ENCODE measurements at regions of chr11 and their contacts with region 1.

Region 1: DNA sequence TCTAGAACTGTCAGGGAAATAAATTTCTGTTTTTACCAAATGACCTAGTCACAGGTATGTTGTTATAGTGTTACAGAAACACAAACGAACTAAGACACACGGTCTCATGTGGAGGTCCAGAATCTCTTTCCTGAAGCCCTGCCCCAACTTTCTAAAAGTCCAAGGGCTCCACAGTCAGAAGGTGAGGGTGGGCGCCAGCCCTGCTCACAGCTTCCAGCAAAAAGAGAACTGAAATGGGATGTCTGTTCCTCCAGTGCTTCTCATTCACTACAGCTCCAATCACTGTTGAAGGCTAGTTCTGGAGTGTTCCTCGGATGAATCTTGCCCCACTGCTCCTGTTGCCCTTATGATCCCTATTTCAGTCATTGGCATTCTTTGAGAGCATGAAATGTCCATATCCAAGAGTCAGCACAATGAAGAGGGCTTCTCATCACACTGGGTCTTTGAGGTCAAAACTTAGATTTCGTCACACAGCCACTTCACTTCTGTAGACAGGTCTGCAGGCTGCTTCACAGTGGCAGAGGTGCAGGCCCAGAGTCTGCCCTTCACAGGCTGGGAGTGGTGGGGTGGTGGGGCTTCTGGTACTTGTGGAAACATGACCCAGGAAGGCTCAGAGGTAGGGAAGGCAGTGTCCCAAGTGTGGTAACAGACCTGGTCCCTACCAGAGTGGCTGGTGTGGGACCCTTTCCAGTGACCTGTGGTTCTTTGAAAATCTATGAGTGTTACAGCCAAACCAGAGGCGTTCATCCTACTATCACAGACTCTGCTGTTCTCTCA is 34.9 kb downstream of the FAM181B start:
- DNase-seq: no peak
- H3K4me3 ChIP-seq: no peak overlapping the region
- H3K27ac ChIP-seq: no peak overlapping the region
- H3K4me1 ChIP-seq: no peaks in the 10 kb centered on the region
- H3K27me3 ChIP-seq: no peaks in the 10 kb centered on the region
- CTCF ChIP-seq: no peak

Region 2: DNA sequence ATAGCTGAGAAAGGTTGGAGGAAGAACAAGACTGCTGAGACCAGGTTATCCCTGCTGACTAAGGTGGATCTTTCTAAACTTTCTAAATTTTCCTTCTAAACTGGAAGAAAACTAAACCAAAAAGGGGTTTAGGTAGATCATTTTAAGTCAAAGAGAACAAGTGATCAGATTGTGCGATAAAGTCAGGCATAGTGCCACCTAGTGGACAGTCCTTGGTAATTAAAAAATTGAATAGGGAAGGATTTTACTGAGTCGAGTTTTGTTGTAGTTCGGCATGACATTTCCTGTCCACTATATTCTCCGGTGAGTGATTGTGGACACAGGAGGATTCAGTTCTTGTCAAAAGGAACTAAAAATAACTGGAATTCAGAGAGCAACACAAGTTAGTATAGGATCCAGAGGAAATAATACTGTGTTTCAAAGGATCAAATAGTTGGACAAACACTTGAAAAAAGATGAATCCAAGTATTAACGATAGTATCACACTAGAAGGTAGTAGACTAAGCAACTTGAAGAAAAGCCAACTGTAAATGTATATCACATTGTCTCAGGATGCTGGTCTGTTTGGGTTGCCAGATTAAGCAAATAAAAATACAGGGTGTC is 1201.5 kb before region 1 on chr11:
- CTCF ChIA-PET with region 1: no interaction called
- POLR2A ChIA-PET with region 1: no interaction called
- intact Hi-C with region 1: loop called (anchors 10 kb)
- DNase-seq: peak; percentile 75
- H3K4me3 ChIP-seq: no peak overlapping the region
- H3K27ac ChIP-seq: no peak overlapping the region
- H3K4me1 ChIP-seq: peaks cover 7% of the 10 kb centered on the region
- H3K27me3 ChIP-seq: no peaks in the 10 kb centered on the region
- CTCF ChIP-seq: peak; percentile 88

Region 3: GRCh38 chr11:81644239-81644840 is 1054.4 kb before region 1 on chr11:
- CTCF ChIA-PET with region 1: interaction called, 3 read pairs
- POLR2A ChIA-PET with region 1: no interaction called
- intact Hi-C with region 1: loop called (anchors 5 kb)
- DNase-seq: peak; percentile 90
- H3K4me3 ChIP-seq: no peak overlapping the region
- H3K27ac ChIP-seq: no peak overlapping the region
- H3K4me1 ChIP-seq: peaks cover 11% of the 10 kb centered on the region
- H3K27me3 ChIP-seq: no peaks in the 10 kb centered on the region
- CTCF ChIP-seq: peak; percentile 90

Region 4: DNA sequence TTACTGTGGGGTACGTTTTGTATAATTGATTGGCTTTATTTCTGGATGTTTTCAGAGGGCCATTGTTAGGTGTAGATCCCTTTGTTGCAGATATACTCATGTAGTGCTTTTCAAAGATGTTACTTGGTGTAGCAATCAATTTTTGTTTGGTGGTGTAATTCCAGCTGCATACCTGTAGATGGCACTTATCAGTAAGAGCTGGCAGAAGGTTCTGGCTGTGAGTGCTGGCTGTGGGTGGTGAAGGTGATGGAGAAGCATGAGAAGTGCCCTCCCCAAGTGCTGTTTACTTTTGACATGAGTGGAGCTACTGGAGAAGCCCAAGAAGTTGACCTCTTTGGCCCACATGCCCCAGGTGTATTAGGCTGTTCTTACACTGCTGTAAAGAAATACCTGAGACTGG is 1040.0 kb before region 1 on chr11:
- CTCF ChIA-PET with region 1: no interaction called
- POLR2A ChIA-PET with region 1: no interaction called
- intact Hi-C with region 1: loop called (anchors 5 kb)
- DNase-seq: peak; percentile 65
- H3K4me3 ChIP-seq: no peak overlapping the region
- H3K27ac ChIP-seq: no peak overlapping the region
- H3K4me1 ChIP-seq: no peaks in the 10 kb centered on the region
- H3K27me3 ChIP-seq: no peaks in the 10 kb centered on the region
- CTCF ChIP-seq: peak; percentile 71

Region 5: DNA sequence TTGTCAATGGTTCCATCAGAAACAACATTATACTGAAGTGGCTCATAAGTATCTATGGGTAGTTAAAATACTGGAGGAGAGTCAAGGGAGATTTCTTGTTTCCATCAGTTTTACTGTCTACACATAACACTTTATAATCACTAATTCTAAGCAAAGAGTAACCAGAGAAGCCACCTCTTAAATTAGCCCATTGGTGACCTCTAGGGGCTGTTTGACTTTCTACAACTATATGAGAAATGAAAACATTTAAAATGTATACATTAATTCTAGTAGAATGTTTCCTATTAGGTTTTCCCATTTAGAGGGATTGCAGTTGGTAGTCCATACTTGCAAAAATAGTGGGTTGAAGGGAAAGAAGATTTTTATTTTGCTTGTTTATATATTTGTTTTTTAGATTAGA is 469.4 kb before region 1 on chr11:
- CTCF ChIA-PET with region 1: no interaction called
- POLR2A ChIA-PET with region 1: no interaction called
- intact Hi-C with region 1: loop called (anchors 5 kb)
- DNase-seq: peak; percentile 58
- H3K4me3 ChIP-seq: no peak overlapping the region
- H3K27ac ChIP-seq: no peak overlapping the region
- H3K4me1 ChIP-seq: no peaks in the 10 kb centered on the region
- H3K27me3 ChIP-seq: no peaks in the 10 kb centered on the region
- CTCF ChIP-seq: peak; percentile 71

Region 6: DNA sequence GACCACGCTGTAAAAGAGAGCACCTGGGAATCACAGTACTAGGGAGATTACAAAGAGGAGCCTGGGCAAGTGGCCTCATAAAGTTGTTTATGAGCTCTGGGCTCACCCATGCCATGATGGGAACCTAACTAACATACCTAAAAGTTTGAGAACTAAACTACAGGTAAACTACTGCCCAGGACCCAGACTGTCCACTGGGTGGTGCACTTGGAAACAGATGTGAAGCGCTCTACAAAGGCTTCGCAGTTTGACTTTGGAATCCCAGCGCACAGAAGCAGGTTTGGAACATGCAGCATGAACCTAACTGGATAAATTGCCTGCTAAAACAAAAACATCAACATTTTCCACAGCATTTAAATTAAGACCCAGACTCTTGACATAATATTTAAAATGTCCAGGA is 383.7 kb before region 1 on chr11:
- CTCF ChIA-PET with region 1: interaction called, 3 read pairs
- POLR2A ChIA-PET with region 1: no interaction called
- intact Hi-C with region 1: loop called (anchors 2 kb)
- DNase-seq: peak; percentile 33
- H3K4me3 ChIP-seq: no peak overlapping the region
- H3K27ac ChIP-seq: no peak overlapping the region
- H3K4me1 ChIP-seq: no peaks in the 10 kb centered on the region
- H3K27me3 ChIP-seq: no peaks in the 10 kb centered on the region
- CTCF ChIP-seq: peak; percentile 67

Region 7: DNA sequence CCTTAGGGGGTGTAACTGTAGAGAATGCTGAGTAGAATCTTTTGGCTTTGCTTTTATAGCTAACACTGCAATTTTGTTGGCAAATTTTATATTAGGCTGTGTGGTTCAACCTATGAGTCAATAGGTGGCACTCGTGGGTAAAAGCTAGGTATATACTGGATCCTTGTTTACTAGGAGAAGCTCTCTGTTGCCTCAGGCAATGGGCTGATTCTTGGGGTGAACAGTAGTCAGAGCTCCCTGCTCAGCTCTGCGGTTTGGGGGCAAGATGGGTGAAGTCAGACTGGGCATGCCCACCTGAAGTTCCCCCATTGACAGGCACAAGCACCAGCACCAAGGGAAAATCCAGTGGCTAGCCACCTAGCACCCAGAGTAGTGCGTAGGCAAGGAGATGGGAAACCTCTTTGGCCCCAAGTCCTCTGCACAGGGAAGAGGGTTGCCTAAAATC is 203.8 kb before region 1 on chr11:
- CTCF ChIA-PET with region 1: interaction called, 21 read pairs
- POLR2A ChIA-PET with region 1: no interaction called
- intact Hi-C with region 1: loop called (anchors 2 kb)
- DNase-seq: peak; percentile 45
- H3K4me3 ChIP-seq: no peak overlapping the region
- H3K27ac ChIP-seq: no peak overlapping the region
- H3K4me1 ChIP-seq: no peaks in the 10 kb centered on the region
- H3K27me3 ChIP-seq: no peaks in the 10 kb centered on the region
- CTCF ChIP-seq: peak; percentile 73

Region 8: GRCh38 chr11:82775736-82776346 is 77.1 kb after region 1 on chr11:
- CTCF ChIA-PET with region 1: no interaction called
- POLR2A ChIA-PET with region 1: no interaction called
- intact Hi-C with region 1: no loop called
- DNase-seq: peak; percentile 89
- H3K4me3 ChIP-seq: no peak overlapping the region
- H3K27ac ChIP-seq: no peak overlapping the region
- H3K4me1 ChIP-seq: peaks cover 4% of the 10 kb centered on the region
- H3K27me3 ChIP-seq: no peaks in the 10 kb centered on the region
- CTCF ChIP-seq: peak; percentile 98

Region 9: GRCh38 chr11:83543706-83544439 is 845.1 kb after region 1 on chr11:
- CTCF ChIA-PET with region 1: no interaction called
- POLR2A ChIA-PET with region 1: no interaction called
- intact Hi-C with region 1: no loop called
- DNase-seq: no peak
- H3K4me3 ChIP-seq: no peak overlapping the region
- H3K27ac ChIP-seq: peak overlapping the region; percentile 8
- H3K4me1 ChIP-seq: peaks cover 75% of the 10 kb centered on the region
- H3K27me3 ChIP-seq: no peaks in the 10 kb centered on the region
- CTCF ChIP-seq: no peak